AG04449 (cell line): ENCODE measurements at regions of chrX and their contacts with region 1.

Region 1: DNA sequence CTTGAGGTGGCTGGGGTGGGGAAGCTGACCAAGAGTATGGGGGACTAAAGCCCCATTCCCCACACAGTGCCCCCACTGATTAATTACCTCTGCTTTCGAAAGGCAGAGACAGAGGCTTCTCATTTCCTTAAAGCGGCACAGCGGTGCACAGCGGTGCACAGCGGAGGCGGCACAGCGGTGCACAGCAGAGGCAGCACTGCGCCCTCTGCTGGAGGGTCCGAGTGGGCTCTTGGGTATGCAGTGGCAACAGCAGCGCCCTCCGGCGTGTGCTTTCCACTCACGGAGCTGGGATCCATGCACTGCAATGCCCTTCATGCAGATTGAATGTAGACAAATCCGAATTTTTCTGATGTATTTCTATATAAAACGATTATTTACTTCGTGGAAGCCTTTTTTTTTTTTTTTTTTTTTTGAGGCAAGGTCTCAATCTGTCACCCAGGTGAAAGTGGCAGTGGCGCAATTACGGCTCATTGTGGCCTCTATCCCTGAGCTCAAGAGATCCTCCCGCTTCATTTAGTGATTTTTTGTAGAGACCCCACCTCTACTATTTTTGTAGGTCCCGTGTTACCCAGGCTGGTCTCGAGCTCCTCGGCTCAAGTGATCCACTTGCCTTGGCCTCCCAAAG is 19.7 kb upstream of the PRPS2 start:
- DNase-seq: no peak
- H3K4me3 ChIP-seq: no peak overlapping the region
- CTCF ChIP-seq: peak; percentile 77

Region 2: GRCh38 chrX:12791257-12792228 is 20.0 kb after region 1 on chrX and contains the start of gene PRPS2:
- CTCF ChIA-PET with region 1: interaction called, 12 read pairs
- POLR2A ChIA-PET with region 1: no interaction called
- DNase-seq: no peak
- H3K4me3 ChIP-seq: peak within 1 kb of the TSS; percentile 71
- CTCF ChIP-seq: no peak

Region 3: DNA sequence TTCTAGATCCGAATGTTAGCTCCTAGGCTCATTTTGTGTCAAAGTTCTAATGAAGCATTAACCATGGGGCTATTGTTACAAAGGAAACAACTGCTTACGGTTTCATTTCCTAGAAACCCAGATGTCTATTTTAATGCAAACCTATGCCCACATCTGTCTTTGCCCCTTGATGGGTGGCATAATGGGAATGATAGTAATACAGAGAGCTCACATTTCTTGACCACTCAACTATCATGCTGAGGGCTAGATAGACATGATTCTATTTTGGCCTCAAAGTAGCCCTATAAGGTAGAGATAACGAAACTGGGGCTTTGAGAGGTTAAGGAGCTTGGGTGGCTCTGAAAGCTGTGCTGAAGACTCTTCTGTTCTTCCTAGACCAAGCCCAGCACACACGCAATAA is 97.2 kb after region 1 on chrX:
- CTCF ChIA-PET with region 1: no interaction called
- POLR2A ChIA-PET with region 1: no interaction called
- DNase-seq: no peak
- H3K4me3 ChIP-seq: no peak overlapping the region
- CTCF ChIP-seq: no peak

Region 4: DNA sequence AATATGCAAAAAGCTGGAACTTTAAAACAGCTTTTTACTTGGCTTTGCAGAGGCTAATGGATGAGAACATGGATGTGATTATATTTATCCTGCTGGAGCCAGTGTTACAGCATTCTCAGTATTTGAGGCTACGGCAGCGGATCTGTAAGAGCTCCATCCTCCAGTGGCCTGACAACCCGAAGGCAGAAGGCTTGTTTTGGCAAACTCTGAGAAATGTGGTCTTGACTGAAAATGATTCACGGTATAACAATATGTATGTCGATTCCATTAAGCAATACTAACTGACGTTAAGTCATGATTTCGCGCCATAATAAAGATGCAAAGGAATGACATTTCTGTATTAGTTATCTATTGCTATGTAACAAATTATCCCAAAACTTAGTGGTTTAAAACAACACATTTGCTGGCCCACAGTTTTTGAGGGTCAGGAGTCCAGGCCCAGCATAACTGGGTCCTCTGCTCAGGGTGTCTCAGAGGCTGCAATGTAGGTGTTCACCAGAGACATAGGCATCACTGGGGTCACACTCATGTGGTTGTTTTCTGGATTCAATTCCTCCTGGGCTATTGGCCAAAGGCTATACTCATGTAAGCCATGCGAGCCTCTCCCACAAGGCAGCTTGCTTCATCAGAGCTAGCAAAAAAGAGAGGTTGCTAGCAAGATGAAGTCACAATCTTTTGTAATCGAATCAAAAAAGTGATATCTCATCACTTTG is 150.5 kb after region 1 on chrX:
- CTCF ChIA-PET with region 1: no interaction called
- POLR2A ChIA-PET with region 1: no interaction called
- DNase-seq: no peak
- H3K4me3 ChIP-seq: no peak overlapping the region
- CTCF ChIP-seq: no peak